A673 (cell line): ENCODE measurements at regions of chr1 and their contacts with region 1.

Region 1: GRCh38 chr1:236759252-236759859 is 35.7 kb upstream of the MTR start:
- DNase-seq: peak; percentile 61
- H3K4me3 ChIP-seq: no peak overlapping the region
- H3K27ac ChIP-seq: no peak overlapping the region
- H3K4me1 ChIP-seq: no peaks in the 10 kb centered on the region
- H3K27me3 ChIP-seq: no peaks in the 10 kb centered on the region
- CTCF ChIP-seq: peak; percentile 62

Region 2: GRCh38 chr1:236471653-236472052 is 287.7 kb before region 1 on chr1:
- CTCF ChIA-PET with region 1: no interaction called
- POLR2A ChIA-PET with region 1: no interaction called
- intact Hi-C with region 1: no loop called
- DNase-seq: peak; percentile 37
- H3K4me3 ChIP-seq: no peak overlapping the region
- H3K27ac ChIP-seq: no peak overlapping the region
- H3K4me1 ChIP-seq: peaks cover 9% of the 10 kb centered on the region
- H3K27me3 ChIP-seq: no peaks in the 10 kb centered on the region
- CTCF ChIP-seq: no peak

Region 3: GRCh38 chr1:237562242-237562823 is 803.0 kb after region 1 on chr1:
- CTCF ChIA-PET with region 1: interaction called, 3 read pairs
- POLR2A ChIA-PET with region 1: no interaction called
- intact Hi-C with region 1: loop called (anchors 5 kb)
- DNase-seq: peak; percentile 71
- H3K4me3 ChIP-seq: no peak overlapping the region
- H3K27ac ChIP-seq: no peak overlapping the region
- H3K4me1 ChIP-seq: no peaks in the 10 kb centered on the region
- H3K27me3 ChIP-seq: no peaks in the 10 kb centered on the region
- CTCF ChIP-seq: peak; percentile 55